PC-9 (cell line): ENCODE measurements at regions of chr7 and their contacts with region 1.

Region 1: GRCh38 chr7:7103343-7104313 is 78.7 kb upstream of the C1GALT1 start:
- DNase-seq: peak in 1 of 2 experiments; percentile 43
- H3K4me3 ChIP-seq: no peak overlapping the region
- H3K27ac ChIP-seq: no peak overlapping the region
- H3K4me1 ChIP-seq: peaks cover 14% of the 10 kb centered on the region
- H3K27me3 ChIP-seq: no peaks in the 10 kb centered on the region
- CTCF ChIP-seq: peak; percentile 80

Region 2: DNA sequence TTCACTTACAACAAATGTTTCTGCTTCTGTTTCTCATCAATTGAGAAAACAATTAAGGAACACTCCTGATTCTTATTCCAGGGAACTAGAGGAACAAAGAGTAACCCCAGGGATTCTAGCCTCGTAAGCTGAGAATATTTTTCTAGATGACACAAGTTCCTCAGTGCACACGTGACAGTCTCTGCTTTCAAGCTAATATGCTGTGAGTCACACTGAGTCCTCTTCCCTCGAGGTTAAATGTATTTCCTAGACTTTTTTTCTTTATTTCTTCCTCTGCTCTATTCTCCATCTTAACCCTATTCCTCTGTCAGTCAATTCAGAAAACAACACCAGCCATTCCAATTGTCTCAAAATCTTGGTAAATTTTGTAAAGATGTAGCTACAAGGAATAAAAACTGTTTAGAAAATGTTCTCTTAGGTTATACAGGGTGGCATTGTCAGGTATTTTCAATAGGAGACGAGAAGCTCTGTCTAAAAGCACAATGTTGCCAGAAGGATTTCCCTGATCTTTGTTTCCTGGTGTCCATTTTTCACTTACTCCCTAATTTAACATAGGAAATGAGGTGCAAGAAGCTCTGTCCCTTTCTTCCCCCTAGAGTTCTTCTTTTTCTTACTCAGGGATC is 72.9 kb after region 1 on chr7:
- CTCF ChIA-PET with region 1: interaction called, 3 read pairs
- POLR2A ChIA-PET with region 1: interaction called, 7 read pairs
- intact Hi-C with region 1: loop called (anchors 1 kb)
- DNase-seq: peak; percentile 24 to 83
- H3K4me3 ChIP-seq: peak overlapping the region; percentile 3; the same call in 1 of the 2 replicates
- H3K27ac ChIP-seq: peak overlapping the region; percentile 87
- H3K4me1 ChIP-seq: peaks cover 47% of the 10 kb centered on the region
- H3K27me3 ChIP-seq: no peaks in the 10 kb centered on the region
- CTCF ChIP-seq: no peak

Region 3: DNA sequence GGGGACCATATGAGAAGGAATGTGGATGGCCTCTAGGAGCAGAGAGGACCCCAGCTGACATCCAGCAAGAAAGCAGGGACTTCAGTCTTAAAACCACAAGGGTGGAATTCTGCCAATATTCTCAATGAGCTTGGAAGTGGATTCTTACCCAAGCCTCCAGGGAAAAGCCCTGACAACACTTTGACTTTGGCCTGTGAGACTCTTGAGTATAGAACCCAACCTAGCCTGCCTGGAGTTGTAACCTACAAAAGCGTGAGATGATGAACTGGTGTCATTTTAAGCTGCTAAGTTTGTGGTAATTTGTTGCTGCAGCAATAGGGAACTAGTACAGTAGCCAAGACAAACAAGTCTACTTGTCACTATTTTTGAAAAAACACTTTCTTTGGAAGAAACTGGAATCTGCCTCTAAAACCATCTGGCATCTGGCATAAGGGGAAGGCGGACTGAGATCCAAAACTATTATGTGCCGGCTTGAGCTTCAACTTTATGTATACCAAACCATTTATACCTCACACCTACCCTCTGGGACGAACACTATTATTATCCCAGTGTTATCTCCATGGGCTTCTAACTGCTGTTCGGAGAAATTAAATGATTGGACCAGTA is 161.6 kb after region 1 on chr7:
- CTCF ChIA-PET with region 1: no interaction called
- POLR2A ChIA-PET with region 1: no interaction called
- intact Hi-C with region 1: loop called (anchors 10 kb)
- DNase-seq: no peak
- H3K4me3 ChIP-seq: no peak overlapping the region
- H3K27ac ChIP-seq: no peak overlapping the region
- H3K4me1 ChIP-seq: peaks cover 10% of the 10 kb centered on the region
- H3K27me3 ChIP-seq: no peaks in the 10 kb centered on the region
- CTCF ChIP-seq: no peak

Region 4: DNA sequence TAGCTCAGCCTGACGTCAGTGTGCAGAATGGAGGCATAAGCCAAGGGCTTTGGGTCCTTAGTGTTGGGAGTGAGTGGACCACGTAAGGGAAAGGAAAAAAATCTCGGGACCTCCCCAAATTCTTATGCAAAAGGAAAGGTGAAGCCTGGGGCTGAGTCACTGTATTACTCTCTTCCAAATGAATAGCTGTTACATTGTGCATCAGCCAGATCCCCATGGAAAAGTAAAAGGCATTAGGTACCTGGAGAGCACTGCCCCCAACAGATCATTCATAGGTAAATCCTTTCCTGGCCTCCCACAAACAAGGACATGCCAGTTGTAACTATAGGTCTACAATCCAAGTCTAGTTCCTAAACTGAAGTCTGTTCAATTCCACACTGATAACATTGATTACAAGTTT is 249.2 kb after region 1 on chr7:
- CTCF ChIA-PET with region 1: no interaction called
- POLR2A ChIA-PET with region 1: no interaction called
- intact Hi-C with region 1: loop called (anchors 2 kb)
- DNase-seq: peak; percentile 18 to 57
- H3K4me3 ChIP-seq: no peak overlapping the region
- H3K27ac ChIP-seq: no peak overlapping the region
- H3K4me1 ChIP-seq: peaks cover 37% of the 10 kb centered on the region
- H3K27me3 ChIP-seq: no peaks in the 10 kb centered on the region
- CTCF ChIP-seq: peak; percentile 32; the same call in 1 of the 2 replicates

Region 5: GRCh38 chr7:7424151-7424873 is 320.7 kb after region 1 on chr7:
- CTCF ChIA-PET with region 1: interaction called, 33 read pairs
- POLR2A ChIA-PET with region 1: no interaction called
- intact Hi-C with region 1: loop called (anchors 1 kb)
- DNase-seq: peak; percentile 55 to 60
- H3K4me3 ChIP-seq: peak overlapping the region; percentile 29; the same call in 1 of the 2 replicates
- H3K27ac ChIP-seq: no peak overlapping the region
- H3K4me1 ChIP-seq: no peaks in the 10 kb centered on the region
- H3K27me3 ChIP-seq: no peaks in the 10 kb centered on the region
- CTCF ChIP-seq: peak; percentile 88

Region 6: DNA sequence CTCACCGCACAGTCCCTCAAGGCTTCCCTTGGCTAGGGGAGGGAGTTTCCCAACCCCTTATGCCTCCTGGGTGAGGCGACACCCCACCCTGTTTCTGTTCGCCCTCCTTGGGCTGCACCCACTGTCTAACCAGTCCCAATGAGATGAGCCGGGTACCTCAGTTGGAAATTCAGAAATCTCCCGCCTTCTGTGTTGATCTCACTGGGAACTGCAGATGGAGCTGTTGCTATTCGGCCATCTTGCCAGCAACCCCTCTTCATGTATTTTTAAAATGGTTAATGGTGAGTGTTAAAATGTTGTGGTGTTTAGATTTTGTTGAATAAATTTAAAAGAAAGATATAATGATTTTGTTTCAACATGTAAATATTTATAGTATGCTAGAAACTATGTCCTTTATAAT is 558.9 kb after region 1 on chr7:
- CTCF ChIA-PET with region 1: interaction called, 13 read pairs
- POLR2A ChIA-PET with region 1: no interaction called
- intact Hi-C with region 1: no loop called
- DNase-seq: peak in 1 of 2 experiments; percentile 7
- H3K4me3 ChIP-seq: no peak overlapping the region
- H3K27ac ChIP-seq: no peak overlapping the region
- H3K4me1 ChIP-seq: no peaks in the 10 kb centered on the region
- H3K27me3 ChIP-seq: no peaks in the 10 kb centered on the region
- CTCF ChIP-seq: peak; percentile 56